ENCODE measurements at regions of chr22 and their contacts with region 1.

Region 1: DNA sequence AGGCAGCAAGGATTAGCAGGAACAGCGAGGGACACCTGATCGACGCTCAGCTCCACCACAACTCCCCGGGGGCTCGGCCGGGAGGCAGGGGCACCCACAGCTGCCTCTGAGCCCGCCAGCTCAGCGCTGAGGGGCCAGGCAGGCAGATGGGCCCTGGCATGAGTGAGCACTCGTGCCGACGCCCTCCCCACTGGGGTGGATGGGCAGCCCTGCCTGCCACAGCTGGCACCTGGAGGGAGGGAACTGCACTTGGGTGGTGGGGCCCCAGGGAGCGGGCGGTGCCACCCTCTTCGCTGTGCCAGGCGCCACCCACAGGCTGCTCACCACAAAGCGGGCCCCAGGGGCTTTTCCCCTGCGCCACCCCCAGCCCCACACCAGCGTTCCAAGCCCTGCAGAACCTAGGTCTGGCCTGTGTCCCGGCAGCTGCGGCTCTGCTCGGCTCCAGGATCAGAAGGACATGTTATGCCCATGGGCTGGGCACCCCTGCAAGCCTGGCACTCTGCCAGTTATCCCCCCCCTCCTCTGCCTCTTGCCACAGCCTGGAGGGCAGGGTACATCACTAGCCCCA is 28.8 kb downstream of the WNT7B start:
- DNase-seq: no peak
- ATAC-seq: no peak
- H3K4me3 ChIP-seq: no peak overlapping the region
- H3K27ac ChIP-seq: no peak overlapping the region
- H3K4me1 ChIP-seq: no peaks in the 10 kb centered on the region
- H3K27me3 ChIP-seq: no peaks in the 10 kb centered on the region; a peak in 1 of 4 replicates
- CTCF ChIP-seq: no peak
- EP300 ChIP-seq: no peak
- POLR2A ChIP-seq: no peak
- RAD21 ChIP-seq: no peak

Region 2: DNA sequence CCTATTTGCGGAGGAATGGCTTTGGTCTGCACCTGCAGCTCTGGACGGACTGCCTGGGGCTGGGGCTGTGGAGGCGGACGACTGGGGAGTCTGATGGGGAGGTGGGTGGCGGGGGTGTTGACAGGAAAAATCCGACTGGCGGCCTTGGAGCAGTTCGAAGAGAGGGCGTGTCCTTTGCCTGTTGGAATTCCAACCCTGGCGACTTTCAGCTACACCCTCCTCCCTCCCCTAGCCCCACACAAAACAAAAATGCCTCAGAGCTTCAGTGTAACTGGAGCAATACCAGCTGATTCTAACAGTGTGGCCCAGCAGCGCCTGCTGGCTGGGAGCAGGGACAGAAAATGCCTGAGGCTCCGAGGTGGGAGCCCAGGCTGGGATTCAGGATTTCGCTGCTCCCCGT is 191.1 kb before region 1 on chr22:
- CTCF ChIA-PET with region 1: no interaction called
- POLR2A ChIA-PET with region 1: no interaction called
- RAD21 ChIA-PET with region 1: no interaction called
- SMC1A ChIA-PET with region 1: no interaction called
- in situ Hi-C with region 1: no loop called
- intact Hi-C with region 1: no loop called
- DNase-seq: no peak
- ATAC-seq: no peak
- H3K4me3 ChIP-seq: no peak overlapping the region
- H3K27ac ChIP-seq: no peak overlapping the region
- H3K4me1 ChIP-seq: peaks cover 3% of the 10 kb centered on the region; the same call in 1 of the 2 replicates
- H3K27me3 ChIP-seq: no peaks in the 10 kb centered on the region
- CTCF ChIP-seq: no peak
- EP300 ChIP-seq: no peak
- POLR2A ChIP-seq: no peak
- RAD21 ChIP-seq: no peak

Region 3: DNA sequence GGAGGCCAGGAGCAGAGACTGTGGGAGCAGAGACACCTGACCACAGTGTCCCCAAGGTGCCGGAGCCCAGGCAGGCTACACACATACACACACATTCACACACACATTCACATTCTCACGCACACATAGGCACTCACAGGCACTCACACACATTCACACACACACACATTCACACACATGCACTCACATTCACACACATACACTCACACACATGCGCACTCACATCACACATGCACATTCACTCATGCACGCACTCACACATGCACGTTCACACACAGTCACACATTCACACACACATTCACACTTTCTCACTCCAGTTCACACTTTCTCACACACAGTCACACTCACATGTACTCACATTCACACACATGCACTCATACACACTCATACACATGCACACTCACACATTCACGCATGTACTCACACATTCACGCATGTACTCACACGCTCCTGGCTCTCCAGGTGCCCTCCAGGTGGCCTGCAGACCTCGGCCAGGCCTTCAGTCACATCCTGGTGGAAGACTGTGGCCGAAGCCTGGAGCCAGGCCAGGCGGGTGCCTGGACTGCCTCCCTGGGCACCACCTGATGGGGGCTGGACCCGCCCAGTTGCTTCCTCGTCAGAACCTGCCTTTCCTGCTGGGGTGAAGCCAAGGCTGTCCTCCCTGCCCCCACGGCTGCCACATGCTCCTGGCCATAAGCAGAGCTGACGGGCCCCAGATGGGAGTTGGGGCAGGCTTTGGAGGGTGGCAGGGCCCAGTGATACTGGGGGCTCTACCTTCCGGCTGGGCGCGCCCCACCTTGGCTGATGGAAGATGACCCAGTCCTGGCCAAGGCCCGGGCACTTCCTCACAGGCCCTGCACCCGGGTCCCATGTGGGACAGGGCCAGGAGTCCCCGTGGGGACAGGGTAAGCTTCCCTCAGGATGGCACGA is 60.7 kb before region 1 on chr22:
- CTCF ChIA-PET with region 1: no interaction called
- POLR2A ChIA-PET with region 1: interaction called, 10 read pairs
- RAD21 ChIA-PET with region 1: no interaction called
- SMC1A ChIA-PET with region 1: no interaction called
- in situ Hi-C with region 1: no loop called
- intact Hi-C with region 1: no loop called
- DNase-seq: no peak
- ATAC-seq: no peak
- H3K4me3 ChIP-seq: no peak overlapping the region
- H3K27ac ChIP-seq: no peak overlapping the region
- H3K4me1 ChIP-seq: no peaks in the 10 kb centered on the region
- H3K27me3 ChIP-seq: no peaks in the 10 kb centered on the region
- CTCF ChIP-seq: no peak
- EP300 ChIP-seq: no peak
- POLR2A ChIP-seq: no peak
- RAD21 ChIP-seq: no peak

Region 4: DNA sequence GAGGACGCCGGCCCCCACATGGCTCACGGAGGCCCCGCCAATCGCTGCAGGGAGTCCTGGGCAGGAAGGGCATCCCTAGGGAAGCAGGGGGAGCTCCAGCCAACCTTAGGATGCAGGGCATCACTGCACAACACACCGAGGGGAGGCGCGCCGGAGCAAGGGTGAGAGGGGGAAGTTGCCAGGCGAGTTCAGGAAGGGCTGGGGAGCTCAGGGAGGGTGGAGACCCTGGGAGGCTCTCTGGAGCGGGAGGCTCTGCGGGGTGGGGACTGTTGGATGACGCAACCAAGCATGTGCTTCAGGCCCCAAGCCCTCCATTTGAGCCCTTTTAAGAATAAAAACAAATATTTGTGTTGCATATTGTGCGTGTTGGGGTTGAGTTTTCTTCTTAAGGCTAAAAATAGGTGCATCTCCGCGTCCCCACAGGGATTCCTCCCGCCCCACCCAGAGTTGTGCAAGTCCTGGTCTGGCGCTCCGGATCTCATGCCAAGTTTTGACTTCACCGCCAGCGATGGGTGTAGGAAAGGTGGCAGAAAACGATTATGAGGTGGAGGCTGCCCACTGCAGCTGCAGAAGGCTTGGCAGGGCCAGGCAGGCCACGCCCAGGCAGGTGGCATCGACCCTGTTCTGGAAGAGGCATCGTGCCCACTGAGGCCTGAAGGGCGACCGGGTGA is 36.4 kb before region 1 on chr22:
- CTCF ChIA-PET with region 1: no interaction called
- POLR2A ChIA-PET with region 1: no interaction called
- RAD21 ChIA-PET with region 1: no interaction called
- SMC1A ChIA-PET with region 1: no interaction called
- in situ Hi-C with region 1: no loop called
- intact Hi-C with region 1: no loop called
- DNase-seq: no peak
- ATAC-seq: no peak
- H3K4me3 ChIP-seq: no peak overlapping the region
- H3K27ac ChIP-seq: no peak overlapping the region
- H3K4me1 ChIP-seq: no peaks in the 10 kb centered on the region
- H3K27me3 ChIP-seq: no peaks in the 10 kb centered on the region
- CTCF ChIP-seq: no peak
- EP300 ChIP-seq: no peak
- POLR2A ChIP-seq: no peak
- RAD21 ChIP-seq: no peak

Region 5: GRCh38 chr22:45984316-45984916 is 36.3 kb after region 1 on chr22:
- CTCF ChIA-PET with region 1: no interaction called
- POLR2A ChIA-PET with region 1: no interaction called
- RAD21 ChIA-PET with region 1: no interaction called
- SMC1A ChIA-PET with region 1: no interaction called
- in situ Hi-C with region 1: no loop called
- intact Hi-C with region 1: no loop called
- DNase-seq: no peak
- ATAC-seq: no peak
- H3K4me3 ChIP-seq: no peak overlapping the region
- H3K27ac ChIP-seq: no peak overlapping the region
- H3K4me1 ChIP-seq: peaks cover under 1% of the 10 kb centered on the region
- H3K27me3 ChIP-seq: no peaks in the 10 kb centered on the region
- CTCF ChIP-seq: no peak
- EP300 ChIP-seq: no peak
- POLR2A ChIP-seq: no peak
- RAD21 ChIP-seq: no peak

Measured in GM12878 (cell line).